ENCODE measurements at regions of chr10 and their contacts with region 1.

Region 1: GRCh38 chr10:117174439-117175214 is 22.7 kb upstream of the KCNK18 start:
- DNase-seq: peak; percentile 64 to 87 (median 82)
- ATAC-seq: peak; percentile 90
- H3K4me3 ChIP-seq: peak overlapping the region; percentile 57
- H3K4me3 Mint-ChIP-seq: peak overlapping the region; percentile 85 to 94 (median 90)
- H3K27ac ChIP-seq: no peak overlapping the region
- H3K27ac Mint-ChIP-seq: peak overlapping the region in 8 of 9 donors; percentile 20 to 66 (median 51)
- H3K4me1 ChIP-seq: peaks cover 7 to 10% of the 10 kb centered on the region in 2 donors
- H3K4me1 Mint-ChIP-seq: peaks cover under 1 to 18% (median 14%) of the 10 kb centered on the region in 7 donors
- H3K27me3 ChIP-seq: no peaks in the 10 kb centered on the region
- H3K27me3 Mint-ChIP-seq: peaks cover 28 to 47% (median 29%) of the 10 kb centered on the region in 5 donors

Region 2: GRCh38 chr10:116687633-116688032 is 487.0 kb before region 1 on chr10:
- CTCF ChIA-PET with region 1: interaction called, 3 read pairs
- POLR2A ChIA-PET with region 1: no interaction called
- intact Hi-C with region 1: loop called (anchors 1 kb)
- DNase-seq: no peak
- ATAC-seq: no peak
- H3K4me3 ChIP-seq: no peak overlapping the region
- H3K4me3 Mint-ChIP-seq: no peak overlapping the region
- H3K27ac ChIP-seq: no peak overlapping the region
- H3K27ac Mint-ChIP-seq: no peak overlapping the region
- H3K4me1 ChIP-seq: no peaks in the 10 kb centered on the region
- H3K4me1 Mint-ChIP-seq: peaks cover 0 to 3% (median 0%) of the 10 kb centered on the region in 7 donors
- H3K27me3 ChIP-seq: peaks cover 0 to 3% of the 10 kb centered on the region in 2 donors
- H3K27me3 Mint-ChIP-seq: peaks cover 4 to 56% (median 39%) of the 10 kb centered on the region in 5 donors

Region 3: GRCh38 chr10:116742367-116743265 is 432.0 kb before region 1 on chr10 and contains the start of gene HSPA12A:
- CTCF ChIA-PET with region 1: no interaction called
- POLR2A ChIA-PET with region 1: no interaction called
- intact Hi-C with region 1: no loop called
- DNase-seq: peak in 5 of 9 donors; percentile 25 to 68 (median 29)
- ATAC-seq: peak; percentile 86
- H3K4me3 ChIP-seq: no peak within 1 kb of the TSS
- H3K4me3 Mint-ChIP-seq: peak within 1 kb of the TSS; percentile 17 to 82 (median 66)
- H3K27ac ChIP-seq: no peak within 1 kb of the TSS
- H3K27ac Mint-ChIP-seq: no peak within 1 kb of the TSS
- H3K4me1 ChIP-seq: peaks cover 0 to 11% of the 10 kb centered on the region in 2 donors
- H3K4me1 Mint-ChIP-seq: peaks cover 0 to 5% (median 4%) of the 10 kb centered on the region in 7 donors
- H3K27me3 ChIP-seq: peaks cover 0 to 26% of the 10 kb centered on the region in 2 donors
- H3K27me3 Mint-ChIP-seq: peaks cover 63 to 74% (median 68%) of the 10 kb centered on the region in 5 donors
- total RNA-seq, gene HSPA12A: 0.07 TPM in 1 of 5 experiments, not detected in the others

Region 4: DNA sequence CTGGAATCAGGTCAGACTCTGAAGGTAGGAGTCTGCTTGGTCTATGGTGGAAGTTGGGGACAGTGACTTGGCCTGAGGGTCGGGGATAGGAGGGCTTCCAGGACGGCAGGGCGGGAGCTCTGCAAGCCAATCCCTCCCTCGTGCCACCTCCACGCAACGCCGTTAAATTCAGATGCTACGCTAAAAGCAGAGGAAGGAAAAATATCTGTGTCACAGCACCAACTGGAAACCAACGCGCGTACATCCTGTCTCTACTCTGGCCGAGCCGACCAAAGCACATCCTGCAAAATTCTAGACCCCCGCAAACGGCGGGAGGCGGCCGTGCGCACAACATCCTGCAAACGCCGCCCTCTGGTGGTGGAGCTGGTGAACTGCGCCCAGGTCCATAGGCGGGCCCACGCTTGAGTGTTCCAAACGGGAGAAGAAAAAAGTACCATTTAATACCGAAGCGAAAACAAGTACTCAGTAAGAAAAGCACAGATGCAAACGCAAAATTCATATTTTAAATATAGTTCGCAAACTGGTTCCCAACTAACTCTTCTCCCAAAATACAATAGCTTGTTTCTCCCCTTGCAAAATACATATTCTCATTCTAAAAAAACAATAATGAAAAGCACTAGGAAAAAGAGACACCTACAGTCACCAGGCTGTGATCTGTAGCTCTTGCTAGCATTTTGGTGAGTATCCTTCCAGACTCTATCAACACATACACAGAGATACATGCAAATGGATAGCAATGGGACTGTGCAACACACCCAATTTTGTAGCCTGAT is 386.5 kb before region 1 on chr10:
- CTCF ChIA-PET with region 1: interaction called, 13 read pairs
- POLR2A ChIA-PET with region 1: no interaction called
- intact Hi-C with region 1: loop called in 1 of 2 experiments (anchors 2 kb)
- DNase-seq: peak; percentile 61 to 84 (median 77)
- ATAC-seq: peak; percentile 92
- H3K4me3 ChIP-seq: peak overlapping the region; percentile 36
- H3K4me3 Mint-ChIP-seq: peak overlapping the region in 9 of 10 donors; percentile 29 to 77 (median 59)
- H3K27ac ChIP-seq: no peak overlapping the region
- H3K27ac Mint-ChIP-seq: peak overlapping the region in 7 of 9 donors; percentile 19 to 88 (median 71)
- H3K4me1 ChIP-seq: peaks cover 0 to 5% of the 10 kb centered on the region in 2 donors
- H3K4me1 Mint-ChIP-seq: peaks cover 0 to 17% (median 12%) of the 10 kb centered on the region in 7 donors
- H3K27me3 ChIP-seq: no peaks in the 10 kb centered on the region
- H3K27me3 Mint-ChIP-seq: peaks cover 8 to 48% (median 34%) of the 10 kb centered on the region in 5 donors

Region 5: GRCh38 chr10:116796910-116797513 is 377.6 kb before region 1 on chr10:
- CTCF ChIA-PET with region 1: interaction called, 27 read pairs
- POLR2A ChIA-PET with region 1: no interaction called
- intact Hi-C with region 1: loop called (anchors 1 kb)
- DNase-seq: peak; percentile 36 to 68 (median 60)
- ATAC-seq: peak; percentile 78
- H3K4me3 ChIP-seq: no peak overlapping the region
- H3K4me3 Mint-ChIP-seq: no peak overlapping the region
- H3K27ac ChIP-seq: no peak overlapping the region
- H3K27ac Mint-ChIP-seq: no peak overlapping the region
- H3K4me1 ChIP-seq: no peaks in the 10 kb centered on the region
- H3K4me1 Mint-ChIP-seq: peaks cover 0 to 2% (median 0%) of the 10 kb centered on the region in 7 donors
- H3K27me3 ChIP-seq: no peaks in the 10 kb centered on the region
- H3K27me3 Mint-ChIP-seq: peaks cover 4 to 41% (median 37%) of the 10 kb centered on the region in 5 donors

Region 6: GRCh38 chr10:117005027-117005526 is 169.6 kb before region 1 on chr10 and contains the start of gene SHTN1:
- CTCF ChIA-PET with region 1: no interaction called
- POLR2A ChIA-PET with region 1: no interaction called
- intact Hi-C with region 1: loop called in 1 of 2 experiments (anchors 10 kb)
- DNase-seq: peak in 8 of 9 donors; percentile 3 to 26 (median 16)
- ATAC-seq: peak; percentile 57
- H3K4me3 ChIP-seq: peak within 1 kb of the TSS; percentile 27
- H3K4me3 Mint-ChIP-seq: peak within 1 kb of the TSS; percentile 61 to 80 (median 73)
- H3K27ac ChIP-seq: no peak within 1 kb of the TSS
- H3K27ac Mint-ChIP-seq: no peak within 1 kb of the TSS
- H3K4me1 ChIP-seq: no peaks in the 10 kb centered on the region
- H3K4me1 Mint-ChIP-seq: peaks cover 0 to 11% (median 6%) of the 10 kb centered on the region in 7 donors
- H3K27me3 ChIP-seq: peaks cover 0 to 8% of the 10 kb centered on the region in 2 donors
- H3K27me3 Mint-ChIP-seq: peaks cover 30 to 64% (median 53%) of the 10 kb centered on the region in 5 donors
- total RNA-seq, gene SHTN1: 0.15 to 18.3 (median 0.59) TPM

Region 7: DNA sequence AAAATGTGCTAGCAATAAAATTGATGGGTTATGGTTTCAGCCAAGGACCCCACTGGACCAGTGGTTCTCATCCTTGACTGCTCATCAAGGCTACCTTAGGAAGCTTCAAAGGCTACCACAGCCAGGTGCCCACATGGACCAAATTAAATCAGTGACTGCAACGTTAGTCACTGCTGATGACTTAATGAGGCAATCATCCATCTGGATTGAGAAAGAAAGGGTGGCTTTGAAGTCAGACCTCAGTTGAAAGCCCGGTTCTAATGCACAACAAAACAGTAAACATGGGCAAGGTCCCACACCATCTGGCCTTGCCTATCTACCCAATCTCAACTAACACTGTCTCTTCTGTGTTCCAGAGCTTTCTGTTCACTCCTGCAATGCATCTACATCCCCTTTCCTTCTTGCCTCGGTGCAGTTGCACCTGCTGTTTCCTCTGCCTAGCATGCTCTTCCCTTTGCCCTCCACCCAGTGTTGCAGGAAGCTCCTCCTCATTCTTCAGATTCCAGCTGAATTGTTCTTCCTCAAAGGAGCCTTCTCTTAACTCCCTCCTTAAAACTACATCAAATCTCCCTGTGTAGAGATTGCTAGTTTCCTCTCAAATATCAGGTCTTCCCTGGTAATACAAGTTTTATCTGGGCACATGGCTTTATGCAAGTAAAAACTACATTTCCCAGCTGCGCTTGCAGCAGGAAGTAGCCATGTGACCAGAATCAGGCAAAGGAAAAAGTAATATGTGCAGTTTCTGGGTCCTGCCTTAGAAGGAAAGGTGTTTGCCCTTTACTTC is 12.4 kb after region 1 on chr10:
- CTCF ChIA-PET with region 1: interaction called, 15 read pairs
- POLR2A ChIA-PET with region 1: no interaction called
- intact Hi-C with region 1: no loop called
- DNase-seq: peak in 1 of 9 donors; percentile 27
- ATAC-seq: no peak
- H3K4me3 ChIP-seq: no peak overlapping the region
- H3K4me3 Mint-ChIP-seq: no peak overlapping the region
- H3K27ac ChIP-seq: no peak overlapping the region
- H3K27ac Mint-ChIP-seq: no peak overlapping the region
- H3K4me1 ChIP-seq: no peaks in the 10 kb centered on the region
- H3K4me1 Mint-ChIP-seq: no peaks in the 10 kb centered on the region
- H3K27me3 ChIP-seq: no peaks in the 10 kb centered on the region
- H3K27me3 Mint-ChIP-seq: peaks cover 0 to 11% (median under 1%) of the 10 kb centered on the region in 5 donors

Region 8: GRCh38 chr10:117375360-117376178 is 200.9 kb after region 1 on chr10 and contains the start of gene PDZD8:
- CTCF ChIA-PET with region 1: no interaction called
- POLR2A ChIA-PET with region 1: no interaction called
- intact Hi-C with region 1: loop called in 1 of 2 experiments (anchors 2 kb)
- DNase-seq: peak; percentile 84 to 93 (median 89)
- ATAC-seq: peak; percentile 93
- H3K4me3 ChIP-seq: peak within 1 kb of the TSS; percentile 92
- H3K4me3 Mint-ChIP-seq: peak within 1 kb of the TSS; percentile 94 to 98 (median 96)
- H3K27ac ChIP-seq: peak within 1 kb of the TSS; percentile 78
- H3K27ac Mint-ChIP-seq: peak within 1 kb of the TSS; percentile 73 to 94 (median 92)
- H3K4me1 ChIP-seq: peaks cover 15 to 21% of the 10 kb centered on the region in 2 donors
- H3K4me1 Mint-ChIP-seq: peaks cover 21 to 36% (median 32%) of the 10 kb centered on the region in 7 donors
- H3K27me3 ChIP-seq: no peaks in the 10 kb centered on the region
- H3K27me3 Mint-ChIP-seq: peaks cover 6 to 45% (median 25%) of the 10 kb centered on the region in 5 donors
- total RNA-seq, gene PDZD8: 12.6 to 24.0 (median 17.1) TPM

Measured in naive thymus-derived CD4-positive, alpha-beta T cell (primary cell).